ENCODE measurements at regions of chr17 and their contacts with region 1.

Region 1: DNA sequence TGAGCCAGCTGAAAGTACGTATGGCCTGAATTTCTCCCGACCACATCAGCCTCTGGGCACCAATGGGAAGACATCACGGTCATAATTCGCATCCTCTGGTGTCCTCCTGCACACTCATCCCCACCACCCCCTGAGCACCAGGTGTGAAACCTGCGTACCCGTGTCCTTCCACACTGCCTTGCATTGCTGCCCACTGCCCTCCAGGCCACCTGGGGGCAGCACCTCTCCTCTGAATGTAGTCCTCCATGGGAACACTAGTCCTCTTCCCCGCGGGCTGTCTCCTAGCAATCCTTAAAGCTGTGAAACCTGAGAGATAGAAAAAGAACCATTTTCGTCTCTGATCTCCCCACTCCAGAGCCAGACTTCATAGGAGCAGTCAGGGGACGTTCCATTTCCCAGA is 125.5 kb downstream of the ZNF18 start:
- DNase-seq: no peak
- ATAC-seq: no peak

Region 2: GRCh38 chr17:11885051-11885450 is 13.3 kb after region 1 on chr17:
- intact Hi-C with region 1: loop called (anchors 1 kb)
- DNase-seq: no peak
- ATAC-seq: no peak

Measured in Right ventricle myocardium inferior (tissue), 1 donor.